ENCODE measurements at regions of chr1 and their contacts with region 1.

Region 1: DNA sequence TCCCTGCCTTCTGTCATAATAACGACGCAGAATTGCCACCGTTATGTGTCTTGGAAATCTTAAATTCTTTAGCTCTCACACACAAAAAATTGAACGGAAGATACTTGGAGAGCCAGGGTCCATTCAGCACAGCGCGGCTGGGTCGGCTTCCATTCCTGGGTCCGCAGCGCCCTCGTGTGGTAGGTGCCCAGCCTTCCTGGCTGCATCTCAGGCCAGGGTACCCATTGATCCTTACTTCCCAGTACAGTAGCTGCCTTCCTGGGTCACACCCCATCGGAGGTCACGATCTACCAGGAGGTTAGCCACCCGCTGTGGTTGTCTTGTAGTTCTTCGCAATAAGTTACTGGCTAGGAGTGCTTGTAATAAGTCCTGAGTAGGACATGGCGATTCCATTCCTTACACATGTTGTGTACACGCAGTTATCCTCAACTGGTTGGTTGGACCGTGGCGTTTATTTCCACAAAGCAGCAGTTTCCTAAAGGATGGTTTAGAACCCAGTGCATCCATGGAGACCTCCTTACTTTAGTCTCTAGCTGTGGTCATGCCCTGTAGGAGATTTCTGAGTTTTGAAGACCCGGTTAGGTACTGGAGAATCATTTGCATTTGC is 9.9 kb upstream of the MTARC1 start:
- DNase-seq: peak; percentile 33
- H3K4me3 ChIP-seq: no peak overlapping the region
- H3K27ac ChIP-seq: no peak overlapping the region
- H3K27me3 ChIP-seq: no peaks in the 10 kb centered on the region
- CTCF ChIP-seq: peak; percentile 95

Region 2: DNA sequence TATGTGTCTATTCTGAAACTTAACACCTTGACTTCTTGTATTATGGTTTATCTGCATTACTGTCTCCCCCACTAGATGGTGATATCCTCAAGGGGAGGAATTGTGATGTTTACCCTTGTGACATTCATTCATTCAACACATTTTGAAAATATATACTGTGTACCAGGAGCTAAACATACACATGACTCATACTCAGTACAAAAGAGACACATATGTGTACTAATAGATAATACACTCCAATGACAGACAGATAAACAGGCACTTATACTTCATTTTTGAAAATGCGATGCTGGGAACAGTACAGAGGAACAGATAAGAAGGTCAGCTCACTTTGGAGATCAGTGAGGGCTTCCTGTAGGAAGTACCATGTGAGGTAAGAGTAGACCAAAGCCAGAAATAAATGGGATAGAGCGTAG is 495.7 kb before region 1 on chr1:
- CTCF ChIA-PET with region 1: interaction called, 30 read pairs
- POLR2A ChIA-PET with region 1: no interaction called
- DNase-seq: no peak
- H3K4me3 ChIP-seq: no peak overlapping the region
- H3K27ac ChIP-seq: no peak overlapping the region
- H3K27me3 ChIP-seq: peaks cover 18% of the 10 kb centered on the region
- CTCF ChIP-seq: peak; percentile 72

Region 3: DNA sequence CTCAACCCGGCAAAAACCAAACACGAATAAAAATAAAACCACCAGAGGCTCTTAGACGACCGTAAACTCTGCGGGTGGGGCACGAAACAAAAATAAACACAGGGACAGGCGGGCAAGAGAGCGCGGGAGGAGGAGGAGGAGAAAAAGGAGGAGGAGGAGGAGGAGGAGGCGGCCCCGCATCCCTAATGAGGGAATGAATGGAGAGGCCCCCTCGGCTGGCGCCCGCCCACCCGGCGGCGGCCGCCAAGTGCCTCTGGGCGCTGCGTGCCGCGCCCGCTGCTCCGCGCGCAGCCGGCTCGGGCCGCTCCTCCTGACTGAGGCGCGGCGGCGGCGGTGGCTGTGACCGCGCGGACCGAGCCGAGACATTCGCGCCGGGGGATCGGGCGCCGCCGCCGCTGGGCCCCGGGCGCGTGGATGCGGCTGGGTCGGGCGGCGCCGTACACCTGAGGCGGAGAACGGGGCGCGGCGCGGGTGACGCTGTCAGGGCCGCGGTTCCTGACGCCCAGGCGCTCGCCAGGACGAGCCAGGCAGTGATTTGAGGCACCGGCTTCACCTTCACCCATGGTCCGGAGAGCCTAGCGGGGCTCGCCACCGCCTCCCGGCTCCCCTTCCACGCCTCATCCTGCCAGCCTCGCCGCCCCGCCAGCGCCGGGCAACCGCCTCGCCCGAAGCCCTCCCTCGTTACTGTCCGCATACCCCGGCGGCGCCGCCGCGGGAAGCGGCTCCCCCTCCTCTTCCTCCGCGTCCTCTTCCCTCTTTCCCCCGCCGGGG is 248.7 kb before region 1 on chr1 and contains the start of gene MARK1:
- CTCF ChIA-PET with region 1: no interaction called
- POLR2A ChIA-PET with region 1: no interaction called
- DNase-seq: no peak
- H3K4me3 ChIP-seq: peak within 1 kb of the TSS; percentile 57
- H3K27ac ChIP-seq: no peak within 1 kb of the TSS
- H3K27me3 ChIP-seq: peaks cover 27% of the 10 kb centered on the region
- CTCF ChIP-seq: no peak
- polyA plus RNA-seq, gene MARK1: not detected in 2 replicates

Region 4: DNA sequence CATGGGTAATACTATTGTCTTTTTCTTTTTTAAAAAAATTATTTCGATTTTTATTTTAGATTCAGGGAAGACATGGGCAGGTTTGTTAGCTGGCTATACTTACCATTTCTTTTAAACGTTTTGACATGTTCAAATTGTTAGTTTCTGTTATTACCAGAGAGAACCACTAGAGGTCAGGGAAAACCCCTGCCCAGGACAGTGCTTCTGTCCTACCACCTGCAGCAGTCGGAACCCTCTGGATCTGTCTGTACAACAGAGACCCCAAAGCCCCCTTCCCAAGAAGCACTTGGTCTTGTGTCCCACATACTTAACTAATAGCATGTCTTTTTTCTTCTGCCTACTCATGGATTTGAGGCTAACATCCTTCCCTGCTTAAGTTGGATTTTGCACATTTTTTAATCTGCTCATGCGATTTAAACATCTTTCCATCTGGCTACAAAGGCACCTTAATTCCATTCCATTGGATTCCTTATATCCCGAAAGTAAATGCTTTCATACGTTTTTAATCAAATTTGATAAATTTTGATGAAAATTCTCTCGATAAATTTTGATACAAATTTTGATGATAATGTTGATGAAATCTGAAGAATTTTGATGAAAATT is 96.6 kb before region 1 on chr1:
- CTCF ChIA-PET with region 1: interaction called, 32 read pairs
- POLR2A ChIA-PET with region 1: no interaction called
- DNase-seq: no peak
- H3K4me3 ChIP-seq: no peak overlapping the region
- H3K27ac ChIP-seq: no peak overlapping the region
- H3K27me3 ChIP-seq: no peaks in the 10 kb centered on the region
- CTCF ChIP-seq: peak; percentile 80

Region 5: DNA sequence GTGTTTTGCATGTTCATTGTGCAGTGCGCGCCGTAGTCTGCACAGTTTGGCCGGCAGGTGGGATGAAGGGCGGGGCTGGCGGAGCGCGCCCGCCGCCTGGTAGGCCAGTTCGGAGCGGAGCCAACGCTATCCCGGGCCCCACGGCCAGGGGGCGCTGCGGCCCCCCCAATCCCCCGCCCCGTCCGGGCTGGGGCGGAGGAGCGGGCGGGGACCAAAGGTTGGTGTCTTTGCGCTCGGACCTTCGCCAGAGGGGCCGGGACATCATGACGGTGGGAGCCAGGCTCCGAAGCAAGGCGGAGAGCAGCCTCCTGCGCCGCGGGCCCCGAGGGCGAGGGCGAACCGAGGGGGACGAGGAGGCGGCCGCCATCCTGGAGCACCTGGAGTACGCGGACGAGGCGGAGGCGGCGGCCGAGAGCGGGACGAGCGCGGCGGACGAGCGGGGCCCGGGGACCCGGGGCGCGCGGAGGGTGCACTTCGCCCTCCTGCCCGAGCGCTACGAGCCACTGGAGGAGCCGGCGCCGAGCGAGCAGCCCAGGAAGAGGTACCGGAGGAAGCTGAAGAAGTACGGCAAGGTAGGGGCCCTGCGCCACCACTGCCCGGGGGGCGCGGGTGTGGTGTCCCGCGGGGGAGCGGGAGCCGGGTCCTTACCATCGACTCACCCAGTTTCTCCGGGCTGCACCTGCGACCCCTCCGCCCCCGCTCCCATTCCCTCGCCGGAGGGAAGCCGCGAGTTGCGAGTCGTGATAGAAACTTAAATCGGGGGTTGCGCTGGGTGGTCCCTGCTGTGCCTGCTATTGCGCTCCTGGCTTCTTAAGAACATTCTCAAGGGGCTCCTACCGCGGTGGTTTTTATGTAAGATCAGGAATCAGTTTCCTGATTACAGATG is 86.4 kb before region 1 on chr1 and contains the start of gene C1orf115:
- CTCF ChIA-PET with region 1: interaction called, 15 read pairs
- POLR2A ChIA-PET with region 1: no interaction called
- DNase-seq: no peak
- H3K4me3 ChIP-seq: peak within 1 kb of the TSS; percentile 50
- H3K27ac ChIP-seq: no peak within 1 kb of the TSS
- H3K27me3 ChIP-seq: peaks cover 27% of the 10 kb centered on the region
- CTCF ChIP-seq: peak; percentile 70
- polyA plus RNA-seq, gene C1orf115: 0.05 and 0.06 TPM in 2 replicates

Measured in AG04450 (cell line).